ENCODE measurements at regions of chr5 and their contacts with region 1.

Region 1: GRCh38 chr5:124867137-124867704 is 120.8 kb upstream of the ZNF608 start:
- DNase-seq: peak in 1 of 2 donors; percentile 18
- ATAC-seq: peak; percentile 79 to 91 (median 86)
- H3K4me3 ChIP-seq: no peak overlapping the region
- H3K4me3 Mint-ChIP-seq: peak overlapping the region; percentile 71
- H3K27ac ChIP-seq: no peak overlapping the region
- H3K27ac Mint-ChIP-seq: peak overlapping the region; percentile 74 to 76
- H3K4me1 ChIP-seq: peaks cover 18% of the 10 kb centered on the region
- H3K4me1 Mint-ChIP-seq: peaks cover 42 to 44% of the 10 kb centered on the region in 2 donors
- H3K27me3 ChIP-seq: no peaks in the 10 kb centered on the region
- H3K27me3 Mint-ChIP-seq: no peaks in the 10 kb centered on the region
- CTCF ChIP-seq: no peak

Region 2: DNA sequence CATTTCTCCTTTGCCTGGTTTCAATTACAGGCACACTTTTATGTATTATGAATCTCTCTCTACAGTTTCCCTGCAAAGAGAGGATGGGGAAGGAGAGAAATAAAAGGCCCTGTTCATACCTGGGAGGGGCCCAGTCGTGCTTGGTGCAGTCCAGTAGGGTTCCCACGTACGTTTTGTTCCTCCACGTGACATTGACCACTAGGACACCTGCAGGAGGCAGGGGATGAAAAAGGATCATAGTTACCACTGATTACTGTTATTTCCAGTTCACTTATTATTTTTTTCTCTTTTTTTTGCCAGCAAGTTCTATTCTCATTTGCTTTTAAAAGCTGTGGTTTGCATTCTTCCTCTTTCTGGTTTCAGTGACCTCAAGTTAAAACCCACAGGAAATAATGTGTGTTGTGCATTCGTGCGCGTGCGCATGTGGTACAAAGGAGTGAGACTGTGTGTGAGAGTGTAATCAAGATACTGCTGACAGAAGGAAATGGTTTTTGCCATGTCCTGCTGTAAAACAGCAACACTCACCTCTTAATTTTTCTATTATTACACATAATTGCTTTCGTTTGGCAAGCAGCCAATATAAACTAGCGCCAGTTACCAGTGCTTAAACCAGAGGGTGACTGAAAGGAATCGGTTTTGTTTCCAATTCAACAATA is 217.6 kb before region 1 on chr5:
- intact Hi-C with region 1: loop called (anchors 2 kb)
- DNase-seq: peak; percentile 71 to 88
- ATAC-seq: peak; percentile 90 to 93 (median 92)
- H3K4me3 ChIP-seq: no peak overlapping the region
- H3K4me3 Mint-ChIP-seq: peak overlapping the region; percentile 82
- H3K27ac ChIP-seq: peak overlapping the region; percentile 8
- H3K27ac Mint-ChIP-seq: peak overlapping the region; percentile 61 to 88
- H3K4me1 ChIP-seq: peaks cover 30% of the 10 kb centered on the region
- H3K4me1 Mint-ChIP-seq: peaks cover 34 to 44% of the 10 kb centered on the region in 2 donors
- H3K27me3 ChIP-seq: peaks cover 68% of the 10 kb centered on the region
- H3K27me3 Mint-ChIP-seq: peaks cover 41 to 47% of the 10 kb centered on the region in 2 donors
- CTCF ChIP-seq: no peak

Region 3: DNA sequence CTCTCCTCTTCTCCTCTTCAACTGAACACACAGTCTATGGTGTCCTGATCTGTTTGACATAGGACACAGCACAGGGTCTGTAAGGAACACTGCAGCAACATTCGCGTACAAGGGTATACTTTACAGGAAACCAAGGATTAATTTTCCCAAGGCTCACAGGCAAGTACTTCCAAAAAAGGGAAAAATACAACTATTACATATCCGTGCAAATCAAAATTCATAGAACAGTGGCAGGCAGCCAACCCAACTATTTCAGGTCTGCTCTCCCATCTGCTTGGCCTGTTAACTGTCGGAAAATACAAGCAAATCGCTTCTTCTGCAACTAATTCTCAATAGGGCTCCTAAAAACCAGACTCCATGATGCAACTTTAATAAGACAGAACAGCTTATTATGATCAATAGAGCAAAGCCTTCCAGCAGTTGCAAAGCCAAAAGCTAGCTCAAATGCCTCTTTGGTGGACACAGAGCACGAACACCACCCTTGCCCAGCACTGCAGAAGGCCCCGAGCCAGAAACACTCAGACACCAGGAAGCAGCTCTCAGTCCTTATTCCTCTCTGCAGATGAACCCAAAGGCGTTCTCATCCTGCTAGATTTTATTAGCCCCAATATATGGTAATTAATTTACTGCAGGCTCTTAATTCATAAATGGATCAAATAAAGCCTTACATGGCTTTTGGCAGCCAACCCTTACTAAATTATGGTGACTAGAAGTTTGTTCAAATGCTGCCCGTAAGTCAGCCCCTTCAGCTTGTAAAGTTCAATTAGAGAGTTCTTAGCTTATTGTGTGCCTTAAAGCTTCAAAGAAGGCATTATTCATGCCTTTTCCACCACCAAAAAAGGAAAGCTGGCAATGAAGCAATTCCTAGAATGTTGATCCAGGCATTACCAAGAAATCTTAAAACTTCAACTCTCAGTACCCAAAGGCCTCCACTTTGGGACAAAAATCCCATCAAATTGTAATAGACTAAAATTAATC is 189.6 kb before region 1 on chr5:
- intact Hi-C with region 1: no loop called
- DNase-seq: no peak
- ATAC-seq: no peak
- H3K4me3 ChIP-seq: no peak overlapping the region
- H3K4me3 Mint-ChIP-seq: no peak overlapping the region
- H3K27ac ChIP-seq: no peak overlapping the region
- H3K27ac Mint-ChIP-seq: no peak overlapping the region
- H3K4me1 ChIP-seq: no peaks in the 10 kb centered on the region
- H3K4me1 Mint-ChIP-seq: no peaks in the 10 kb centered on the region
- H3K27me3 ChIP-seq: no peaks in the 10 kb centered on the region
- H3K27me3 Mint-ChIP-seq: peaks cover 13 to 29% of the 10 kb centered on the region in 2 donors
- CTCF ChIP-seq: no peak

Region 4: GRCh38 chr5:124935065-124935464 is 67.8 kb after region 1 on chr5:
- intact Hi-C with region 1: loop called (anchors 5 kb)
- DNase-seq: peak; percentile 38 to 48
- ATAC-seq: peak; percentile 51 to 76 (median 72)
- H3K4me3 ChIP-seq: no peak overlapping the region
- H3K4me3 Mint-ChIP-seq: peak overlapping the region; percentile 76
- H3K27ac ChIP-seq: peak overlapping the region; percentile 60
- H3K27ac Mint-ChIP-seq: peak overlapping the region; percentile 86 to 96
- H3K4me1 ChIP-seq: peaks cover 20% of the 10 kb centered on the region
- H3K4me1 Mint-ChIP-seq: peaks cover 21 to 26% of the 10 kb centered on the region in 2 donors
- H3K27me3 ChIP-seq: no peaks in the 10 kb centered on the region
- H3K27me3 Mint-ChIP-seq: no peaks in the 10 kb centered on the region
- CTCF ChIP-seq: no peak

Region 5: DNA sequence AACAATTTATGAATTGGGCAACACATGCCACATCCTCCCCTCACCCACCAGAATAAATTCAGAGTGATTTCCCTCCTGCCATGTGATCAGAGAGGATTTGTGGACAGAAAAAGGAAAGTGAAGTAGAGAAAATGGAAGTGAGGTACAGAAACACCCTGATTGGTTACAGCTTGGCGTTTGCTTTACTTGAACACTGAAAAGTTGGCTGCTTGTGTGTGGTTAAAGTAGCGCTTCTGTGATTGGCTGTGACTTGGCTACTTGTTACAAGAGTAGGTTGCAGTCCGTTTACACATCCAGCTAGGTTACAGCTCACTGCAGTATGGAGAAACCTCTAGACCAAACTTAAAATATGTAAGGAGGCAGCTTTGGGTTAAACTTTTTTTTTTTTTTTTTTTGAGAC is 84.4 kb after region 1 on chr5:
- intact Hi-C with region 1: loop called (anchors 1 kb)
- DNase-seq: peak in 1 of 2 donors; percentile 42
- ATAC-seq: peak; percentile 63 to 81 (median 66)
- H3K4me3 ChIP-seq: no peak overlapping the region
- H3K4me3 Mint-ChIP-seq: peak overlapping the region; percentile 53
- H3K27ac ChIP-seq: peak overlapping the region; percentile 50
- H3K27ac Mint-ChIP-seq: peak overlapping the region; percentile 68 to 80
- H3K4me1 ChIP-seq: peaks cover 10% of the 10 kb centered on the region
- H3K4me1 Mint-ChIP-seq: peaks cover 17 to 18% of the 10 kb centered on the region in 2 donors
- H3K27me3 ChIP-seq: no peaks in the 10 kb centered on the region
- H3K27me3 Mint-ChIP-seq: peaks cover 0 to 3% of the 10 kb centered on the region in 2 donors
- CTCF ChIP-seq: no peak

Region 6: GRCh38 chr5:125023673-125024072 is 156.5 kb after region 1 on chr5:
- intact Hi-C with region 1: no loop called
- DNase-seq: no peak
- ATAC-seq: no peak
- H3K4me3 ChIP-seq: no peak overlapping the region
- H3K4me3 Mint-ChIP-seq: no peak overlapping the region
- H3K27ac ChIP-seq: no peak overlapping the region
- H3K27ac Mint-ChIP-seq: no peak overlapping the region
- H3K4me1 ChIP-seq: no peaks in the 10 kb centered on the region
- H3K4me1 Mint-ChIP-seq: no peaks in the 10 kb centered on the region
- H3K27me3 ChIP-seq: no peaks in the 10 kb centered on the region
- H3K27me3 Mint-ChIP-seq: peaks cover 3 to 28% of the 10 kb centered on the region in 2 donors
- CTCF ChIP-seq: no peak

Measured in natural killer cell (primary cell).